Colonic mucosa (tissue), 4 donors: ENCODE measurements at regions of chr21 and their contacts with region 1.

Region 1: DNA sequence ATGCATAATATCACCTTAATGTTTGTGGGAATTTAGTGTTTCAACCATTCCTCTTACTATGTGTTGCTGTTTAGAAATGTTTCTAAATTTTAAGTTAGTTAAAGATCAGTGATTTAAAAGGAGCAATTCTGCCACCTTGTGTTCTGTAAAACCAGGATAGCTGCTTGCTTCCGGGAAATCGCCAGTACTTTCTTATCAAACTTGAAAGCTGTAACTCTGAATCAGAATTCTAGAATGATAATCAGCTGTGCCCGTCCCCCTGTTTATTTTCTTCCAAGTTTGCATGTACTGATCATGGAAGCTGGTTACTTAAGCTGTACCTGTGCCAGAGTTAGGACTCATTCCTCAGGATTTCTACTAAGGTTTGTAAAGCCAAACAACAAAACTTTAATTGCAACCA is 656.4 kb downstream of the LTN1 start:
- DNase-seq: no peak
- H3K4me3 ChIP-seq: no peak overlapping the region
- H3K27ac ChIP-seq: no peak overlapping the region
- H3K4me1 ChIP-seq: no peaks in the 10 kb centered on the region
- H3K27me3 ChIP-seq: no peaks in the 10 kb centered on the region
- CTCF ChIP-seq: no peak

Region 2: DNA sequence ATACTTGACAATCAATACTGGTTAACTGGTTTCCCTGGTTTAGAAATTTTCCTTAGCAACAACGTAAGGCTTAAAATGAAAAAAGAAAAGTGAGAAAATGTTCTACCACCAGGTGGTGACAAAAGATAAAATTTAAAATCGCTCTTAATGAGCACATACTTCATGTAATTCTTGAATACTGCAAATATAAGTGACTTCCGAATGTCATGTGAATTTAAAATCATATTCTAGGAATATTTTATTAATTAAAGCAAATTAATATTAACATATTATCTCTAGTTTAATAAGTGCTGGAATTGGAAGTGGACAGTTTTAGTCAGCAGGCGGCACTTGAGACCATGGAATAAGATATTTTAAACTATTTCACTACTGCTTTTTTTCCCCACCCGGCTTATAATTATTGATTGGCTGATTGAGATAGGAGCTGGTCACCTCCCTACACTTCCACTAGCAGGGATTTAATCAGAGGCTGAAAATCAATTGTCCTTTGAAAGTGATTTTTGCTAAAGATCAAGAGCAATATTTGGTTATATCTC is 1486.1 kb before region 1 on chr21:
- intact Hi-C with region 1: loop called (anchors 10 kb)
- DNase-seq: no peak
- H3K4me3 ChIP-seq: no peak overlapping the region
- H3K27ac ChIP-seq: no peak overlapping the region
- H3K4me1 ChIP-seq: peaks cover 10% of the 10 kb centered on the region
- H3K27me3 ChIP-seq: peaks cover 21% of the 10 kb centered on the region
- CTCF ChIP-seq: peak; percentile 67

Region 3: DNA sequence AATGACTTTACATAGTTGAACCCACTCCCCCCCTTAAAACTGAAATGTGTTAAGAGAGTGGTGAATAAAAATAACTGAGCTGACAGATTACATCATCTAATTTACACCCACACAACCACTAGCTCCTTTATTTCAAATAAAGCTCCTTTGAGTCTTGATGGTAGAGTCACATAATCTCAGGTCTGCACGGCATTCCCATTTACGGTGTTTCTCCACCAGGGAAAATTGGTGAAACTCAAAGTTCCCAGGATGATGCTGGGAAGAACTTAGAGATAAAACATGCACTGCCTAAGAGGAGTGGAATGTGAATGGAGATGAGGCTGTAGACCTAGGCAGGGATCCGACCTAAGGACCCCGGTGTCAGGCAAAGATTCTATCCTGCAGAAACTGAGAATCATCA is 641.6 kb before region 1 on chr21:
- intact Hi-C with region 1: loop called (anchors 5 kb)
- DNase-seq: no peak
- H3K4me3 ChIP-seq: no peak overlapping the region
- H3K27ac ChIP-seq: no peak overlapping the region
- H3K4me1 ChIP-seq: no peaks in the 10 kb centered on the region
- H3K27me3 ChIP-seq: no peaks in the 10 kb centered on the region
- CTCF ChIP-seq: no peak

Region 4: GRCh38 chr21:28063241-28064216 is 272.8 kb before region 1 on chr21:
- intact Hi-C with region 1: loop called (anchors 10 kb)
- DNase-seq: no peak
- H3K4me3 ChIP-seq: no peak overlapping the region
- H3K27ac ChIP-seq: no peak overlapping the region
- H3K4me1 ChIP-seq: no peaks in the 10 kb centered on the region
- H3K27me3 ChIP-seq: no peaks in the 10 kb centered on the region
- CTCF ChIP-seq: no peak

Region 5: DNA sequence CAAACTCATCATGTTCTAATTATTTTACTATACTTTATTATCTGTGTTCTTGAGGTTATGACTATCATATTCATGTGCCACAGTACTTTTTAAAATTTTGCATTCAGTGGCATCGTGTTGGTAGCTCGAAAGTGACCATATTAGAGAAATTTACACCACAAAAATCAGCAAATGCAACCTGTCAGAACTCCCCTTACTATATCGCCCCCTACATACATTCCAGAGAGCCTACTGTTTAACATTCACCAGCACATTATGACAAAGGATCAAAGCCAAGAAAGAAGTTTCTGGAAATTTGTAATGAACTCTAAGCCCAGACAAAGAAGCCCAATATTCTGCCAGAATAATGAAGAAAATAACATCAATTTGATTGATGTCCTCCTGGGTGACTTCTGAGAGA is 253.0 kb before region 1 on chr21:
- intact Hi-C with region 1: no loop called
- DNase-seq: no peak
- H3K4me3 ChIP-seq: no peak overlapping the region
- H3K27ac ChIP-seq: no peak overlapping the region
- H3K4me1 ChIP-seq: no peaks in the 10 kb centered on the region
- H3K27me3 ChIP-seq: no peaks in the 10 kb centered on the region
- CTCF ChIP-seq: no peak